ENCODE measurements at regions of chr19 and their contacts with region 1.

Region 1: GRCh38 chr19:58154679-58155648 is 4.4 kb upstream of the ZNF329 start:
- DNase-seq: peak; percentile 97
- H3K4me3 Mint-ChIP-seq: peak overlapping the region; percentile 73
- H3K27ac Mint-ChIP-seq: no peak overlapping the region
- H3K4me1 Mint-ChIP-seq: peaks cover 17% of the 10 kb centered on the region
- H3K27me3 Mint-ChIP-seq: no peaks in the 10 kb centered on the region

Region 2: DNA sequence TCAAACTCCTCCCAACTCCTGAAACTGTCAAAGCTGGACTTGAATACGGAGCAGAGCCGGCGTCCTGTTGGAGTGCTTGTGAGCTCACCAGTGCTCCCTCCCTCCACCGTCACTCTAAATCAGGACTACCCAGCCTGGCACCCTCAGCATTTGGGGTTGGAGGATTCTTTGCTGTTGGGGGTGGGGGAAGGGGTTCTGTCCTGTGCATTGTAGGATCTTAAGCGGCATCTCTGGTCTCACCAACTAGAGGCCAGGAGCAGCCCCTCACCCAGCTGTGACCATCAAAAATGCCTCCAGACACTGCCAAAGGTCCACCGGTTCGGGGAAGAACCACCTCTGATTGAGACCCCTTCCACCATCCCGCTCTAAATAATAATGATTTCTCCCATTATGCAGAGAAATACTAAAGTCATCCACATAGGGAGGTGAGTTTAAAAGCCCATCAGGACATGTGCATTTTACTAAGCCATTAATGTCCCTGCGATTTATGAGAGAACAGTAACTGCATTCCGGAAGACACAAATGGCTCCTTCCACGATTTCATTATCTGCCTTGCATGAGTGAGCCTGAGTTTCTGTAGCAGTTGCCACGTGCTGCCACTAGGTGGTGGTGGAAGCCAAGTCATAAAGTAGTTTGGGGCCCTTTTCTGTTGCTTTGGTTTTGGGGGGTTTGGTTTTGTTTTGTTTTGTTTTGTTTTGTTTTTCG is 1051.2 kb before region 1 on chr19:
- CTCF ChIA-PET with region 1: no interaction called
- intact Hi-C with region 1: loop called (anchors 1 kb)
- DNase-seq: peak; percentile 67
- H3K4me3 Mint-ChIP-seq: no peak overlapping the region
- H3K27ac Mint-ChIP-seq: no peak overlapping the region
- H3K4me1 Mint-ChIP-seq: peaks cover 2% of the 10 kb centered on the region
- H3K27me3 Mint-ChIP-seq: peaks cover 13% of the 10 kb centered on the region

Region 3: GRCh38 chr19:57477191-57478008 is 677.6 kb before region 1 on chr19 and contains the start of gene ZNF772:
- CTCF ChIA-PET with region 1: no interaction called
- intact Hi-C with region 1: loop called (anchors 10 kb)
- DNase-seq: peak; percentile 93
- H3K4me3 Mint-ChIP-seq: peak within 1 kb of the TSS; percentile 83
- H3K27ac Mint-ChIP-seq: peak within 1 kb of the TSS; percentile 82
- H3K4me1 Mint-ChIP-seq: peaks cover 21% of the 10 kb centered on the region
- H3K27me3 Mint-ChIP-seq: no peaks in the 10 kb centered on the region
- total RNA-seq, gene ZNF772: 6.0 to 8.3 TPM

Region 4: GRCh38 chr19:57746580-57747471 is 408.1 kb before region 1 on chr19 and contains the start of gene ZNF776:
- CTCF ChIA-PET with region 1: no interaction called
- intact Hi-C with region 1: loop called (anchors 2 kb)
- DNase-seq: peak; percentile 90
- H3K4me3 Mint-ChIP-seq: peak within 1 kb of the TSS; percentile 99
- H3K27ac Mint-ChIP-seq: peak within 1 kb of the TSS; percentile 90
- H3K4me1 Mint-ChIP-seq: peaks cover 17% of the 10 kb centered on the region
- H3K27me3 Mint-ChIP-seq: no peaks in the 10 kb centered on the region
- total RNA-seq, gene ZNF776: 9.4 to 10.3 TPM

Region 5: DNA sequence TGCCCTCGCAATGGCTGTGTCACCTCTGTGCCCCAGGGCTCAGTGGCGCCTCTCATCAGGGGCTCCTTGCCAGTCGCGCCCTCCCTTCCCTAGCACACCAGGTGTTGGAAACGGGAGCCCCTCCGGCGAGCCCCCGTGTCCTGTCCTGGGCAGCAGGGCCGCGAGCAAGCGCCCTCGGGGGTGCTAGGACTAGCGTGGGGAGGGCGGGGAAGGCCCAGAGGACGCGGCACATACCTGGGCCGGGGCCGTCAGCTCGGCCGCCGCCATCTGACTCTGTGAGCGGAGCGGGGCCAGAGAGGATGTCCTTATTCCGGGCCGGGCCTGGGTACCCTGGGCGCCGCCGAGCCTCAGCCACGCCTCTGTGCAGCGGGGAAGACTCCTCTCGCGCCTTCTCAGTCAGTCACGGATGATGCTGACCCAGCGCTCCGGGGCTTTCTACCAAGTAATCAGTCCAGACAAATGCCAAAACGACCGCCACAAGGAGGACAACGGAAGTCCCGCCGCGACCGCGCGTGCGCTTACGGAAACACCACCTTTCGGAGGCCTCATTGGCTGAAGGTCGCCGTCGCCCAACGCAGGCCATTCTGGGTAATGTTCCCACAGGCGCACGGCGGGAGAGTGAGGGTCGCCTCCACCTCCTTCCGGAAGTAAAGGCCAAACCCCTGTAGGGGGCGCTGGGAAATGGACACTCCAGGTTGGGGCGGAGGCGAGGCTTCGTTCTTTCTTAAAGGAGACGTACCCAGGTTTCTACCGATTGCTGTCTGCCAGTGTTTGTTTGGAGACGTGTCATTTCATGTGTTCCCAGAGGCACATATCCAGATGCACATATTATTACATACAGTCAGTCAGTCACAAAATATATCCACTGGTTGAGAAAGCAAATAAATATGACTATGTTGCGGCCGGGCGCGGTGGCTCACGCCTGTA is 207.5 kb before region 1 on chr19 and contains the start of gene ZNF256:
- CTCF ChIA-PET with region 1: no interaction called
- intact Hi-C with region 1: loop called (anchors 1 kb)
- DNase-seq: peak; percentile 93
- H3K4me3 Mint-ChIP-seq: peak within 1 kb of the TSS; percentile 91
- H3K27ac Mint-ChIP-seq: peak within 1 kb of the TSS; percentile 87
- H3K4me1 Mint-ChIP-seq: peaks cover 17% of the 10 kb centered on the region
- H3K27me3 Mint-ChIP-seq: no peaks in the 10 kb centered on the region
- total RNA-seq, gene ZNF256: 4.4 to 4.7 TPM

Region 6: GRCh38 chr19:58021541-58022282 is 133.3 kb before region 1 on chr19:
- CTCF ChIA-PET with region 1: no interaction called
- intact Hi-C with region 1: loop called (anchors 1 kb)
- DNase-seq: peak; percentile 53
- H3K4me3 Mint-ChIP-seq: no peak overlapping the region
- H3K27ac Mint-ChIP-seq: no peak overlapping the region
- H3K4me1 Mint-ChIP-seq: no peaks in the 10 kb centered on the region
- H3K27me3 Mint-ChIP-seq: no peaks in the 10 kb centered on the region

Region 7: GRCh38 chr19:58059003-58059670 is 95.8 kb before region 1 on chr19 and contains the start of gene ZNF135:
- CTCF ChIA-PET with region 1: no interaction called
- intact Hi-C with region 1: no loop called
- DNase-seq: peak; percentile 72
- H3K4me3 Mint-ChIP-seq: peak within 1 kb of the TSS; percentile 57
- H3K27ac Mint-ChIP-seq: peak within 1 kb of the TSS; percentile 63
- H3K4me1 Mint-ChIP-seq: peaks cover 4% of the 10 kb centered on the region
- H3K27me3 Mint-ChIP-seq: peaks cover 35% of the 10 kb centered on the region
- total RNA-seq, gene ZNF135: 0.54 to 0.62 TPM

Region 8: GRCh38 chr19:58128041-58128685 is 26.8 kb before region 1 on chr19:
- CTCF ChIA-PET with region 1: no interaction called
- intact Hi-C with region 1: no loop called
- DNase-seq: no peak
- H3K4me3 Mint-ChIP-seq: no peak overlapping the region
- H3K27ac Mint-ChIP-seq: no peak overlapping the region
- H3K4me1 Mint-ChIP-seq: no peaks in the 10 kb centered on the region
- H3K27me3 Mint-ChIP-seq: no peaks in the 10 kb centered on the region

Measured in activated naive CD4-positive, alpha-beta T cell treated with anti-CD3 and anti-CD28 coated beads for 36 hours (primary cell).